Endothelial cell of umbilical vein (primary cell): ENCODE measurements at regions of chr17 and their contacts with region 1.

Region 1: GRCh38 chr17:82022981-82023374 is at the start of gene LRRC45:
- DNase-seq: peak; percentile 100
- H3K4me3 ChIP-seq: peak within 1 kb of the TSS; percentile 50 to 70 (median 60)
- H3K27ac ChIP-seq: peak within 1 kb of the TSS; percentile 21
- H3K4me1 ChIP-seq: peaks cover 12% of the 10 kb centered on the region
- H3K27me3 ChIP-seq: no peaks in the 10 kb centered on the region
- CTCF ChIP-seq: no peak
- POLR2A ChIP-seq: no peak
- total RNA-seq, gene LRRC45: 18.6 and 22.9 TPM in 2 replicates

Region 2: GRCh38 chr17:81871387-81872230 is 151.4 kb before region 1 on chr17:
- CTCF ChIA-PET with region 1: interaction called, 16 read pairs
- POLR2A ChIA-PET with region 1: no interaction called
- dilution Hi-C with region 1: no loop called
- intact Hi-C with region 1: no loop called
- DNase-seq: peak; percentile 81
- H3K4me3 ChIP-seq: peak overlapping the region; percentile 7 to 77 (median 50)
- H3K27ac ChIP-seq: peak overlapping the region; percentile 77
- H3K4me1 ChIP-seq: peaks cover 17% of the 10 kb centered on the region
- H3K27me3 ChIP-seq: no peaks in the 10 kb centered on the region
- CTCF ChIP-seq: peak; percentile 6 to 45
- POLR2A ChIP-seq: peak; percentile 29

Region 3: DNA sequence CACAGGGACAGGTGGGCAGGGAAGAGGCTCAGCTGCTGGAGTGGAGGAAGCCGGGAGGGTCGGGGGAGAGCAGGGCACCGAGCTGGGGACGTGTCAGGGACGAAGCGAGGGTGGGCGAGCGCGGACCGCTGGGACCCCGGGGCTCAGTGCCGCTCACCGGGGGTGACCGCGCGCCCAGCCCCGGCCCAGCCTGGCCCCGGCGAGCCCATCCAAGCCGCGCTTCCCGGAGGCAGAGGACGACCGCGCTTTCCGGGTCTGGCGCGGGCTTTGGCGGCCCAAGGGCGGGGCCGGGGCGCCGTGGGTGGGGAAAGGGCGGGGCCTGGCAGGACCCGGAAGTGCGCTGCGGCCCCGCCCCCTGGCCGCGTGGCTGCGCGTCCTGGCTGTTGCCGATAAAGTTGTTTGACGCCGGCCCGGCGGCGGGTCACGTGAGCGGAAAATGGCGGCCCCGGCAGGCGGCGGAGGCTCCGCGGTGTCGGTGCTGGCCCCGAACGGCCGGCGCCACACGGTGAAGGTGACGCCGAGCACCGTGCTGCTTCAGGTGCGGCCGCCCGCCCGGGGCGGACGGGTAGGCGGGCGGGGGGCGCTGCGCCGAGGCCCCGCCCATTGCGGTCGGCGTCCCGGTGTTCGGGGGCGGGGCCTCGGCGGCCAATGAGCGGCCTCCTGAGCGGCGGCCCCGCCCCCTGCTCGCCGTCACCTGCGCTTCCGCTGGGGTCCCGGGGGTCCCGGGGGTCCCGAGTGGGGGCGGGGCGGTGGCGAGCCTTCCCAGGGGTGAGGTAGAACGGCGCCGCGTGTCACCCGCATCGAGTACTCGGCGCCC is 45.6 kb before region 1 on chr17 and contains the start of gene ASPSCR1:
- CTCF ChIA-PET with region 1: interaction called, 5 read pairs
- POLR2A ChIA-PET with region 1: no interaction called
- dilution Hi-C with region 1: no loop called
- intact Hi-C with region 1: loop called (anchors 5 kb)
- DNase-seq: peak; percentile 87
- H3K4me3 ChIP-seq: peak within 1 kb of the TSS; percentile 56 to 80 (median 61)
- H3K27ac ChIP-seq: peak within 1 kb of the TSS; percentile 90
- H3K4me1 ChIP-seq: peaks cover 5% of the 10 kb centered on the region
- H3K27me3 ChIP-seq: no peaks in the 10 kb centered on the region
- CTCF ChIP-seq: no peak
- POLR2A ChIP-seq: peak; percentile 92
- total RNA-seq, gene ASPSCR1: 30.9 and 36.5 TPM in 2 replicates

Region 4: DNA sequence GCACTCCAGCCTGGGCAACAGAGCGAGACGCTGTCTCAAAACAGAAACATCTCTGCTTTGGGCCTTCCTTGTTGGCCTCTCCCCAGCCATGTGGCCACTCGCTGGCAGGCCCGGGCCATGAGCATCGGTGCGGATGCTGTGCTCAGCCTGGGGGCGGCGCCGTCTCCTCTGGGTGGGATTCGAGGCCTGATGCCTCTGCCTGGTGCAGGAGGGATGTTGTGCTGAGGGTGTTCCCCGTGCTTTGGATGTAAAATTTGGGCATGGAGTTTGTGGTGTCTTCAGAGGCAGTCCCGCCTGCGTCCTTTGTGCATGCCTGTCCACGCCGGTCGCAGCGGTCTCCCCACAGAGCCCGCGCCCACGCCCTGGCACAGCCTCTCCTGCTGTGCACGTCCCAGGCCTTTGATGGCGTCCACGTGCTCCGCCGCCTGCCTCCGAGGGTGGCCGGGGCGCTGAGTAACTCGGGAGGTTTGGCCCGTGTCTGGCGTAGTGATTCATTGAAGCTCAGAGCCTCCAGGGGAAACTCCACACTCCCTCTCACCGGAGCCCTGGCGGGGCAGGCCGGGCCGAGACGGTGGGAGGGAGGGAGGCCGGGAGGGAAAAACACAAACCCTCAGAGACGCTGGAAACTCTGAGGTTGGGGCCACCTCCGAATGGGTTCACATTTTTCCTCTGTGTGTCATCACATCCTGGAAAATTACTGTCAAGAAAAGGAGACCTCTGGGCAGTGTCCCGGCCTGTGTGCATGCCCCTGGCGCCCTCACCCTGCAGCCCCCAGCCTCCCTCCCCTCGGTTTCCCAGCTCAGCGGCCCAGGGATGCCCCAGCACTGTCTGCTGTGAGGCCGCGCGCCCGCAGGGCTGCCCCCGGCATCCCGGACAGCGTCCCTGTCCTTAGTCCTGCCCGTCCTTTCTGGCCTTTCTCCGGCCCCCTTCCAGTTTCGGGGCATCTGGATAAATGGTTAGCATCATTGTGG is 19.3 kb before region 1 on chr17:
- CTCF ChIA-PET with region 1: interaction called, 30 read pairs
- POLR2A ChIA-PET with region 1: no interaction called
- dilution Hi-C with region 1: no loop called
- intact Hi-C with region 1: no loop called
- DNase-seq: peak; percentile 93
- H3K4me3 ChIP-seq: no peak overlapping the region
- H3K27ac ChIP-seq: peak overlapping the region; percentile 54
- H3K4me1 ChIP-seq: peaks cover 13% of the 10 kb centered on the region
- H3K27me3 ChIP-seq: no peaks in the 10 kb centered on the region
- CTCF ChIP-seq: no peak
- POLR2A ChIP-seq: no peak

Region 5: DNA sequence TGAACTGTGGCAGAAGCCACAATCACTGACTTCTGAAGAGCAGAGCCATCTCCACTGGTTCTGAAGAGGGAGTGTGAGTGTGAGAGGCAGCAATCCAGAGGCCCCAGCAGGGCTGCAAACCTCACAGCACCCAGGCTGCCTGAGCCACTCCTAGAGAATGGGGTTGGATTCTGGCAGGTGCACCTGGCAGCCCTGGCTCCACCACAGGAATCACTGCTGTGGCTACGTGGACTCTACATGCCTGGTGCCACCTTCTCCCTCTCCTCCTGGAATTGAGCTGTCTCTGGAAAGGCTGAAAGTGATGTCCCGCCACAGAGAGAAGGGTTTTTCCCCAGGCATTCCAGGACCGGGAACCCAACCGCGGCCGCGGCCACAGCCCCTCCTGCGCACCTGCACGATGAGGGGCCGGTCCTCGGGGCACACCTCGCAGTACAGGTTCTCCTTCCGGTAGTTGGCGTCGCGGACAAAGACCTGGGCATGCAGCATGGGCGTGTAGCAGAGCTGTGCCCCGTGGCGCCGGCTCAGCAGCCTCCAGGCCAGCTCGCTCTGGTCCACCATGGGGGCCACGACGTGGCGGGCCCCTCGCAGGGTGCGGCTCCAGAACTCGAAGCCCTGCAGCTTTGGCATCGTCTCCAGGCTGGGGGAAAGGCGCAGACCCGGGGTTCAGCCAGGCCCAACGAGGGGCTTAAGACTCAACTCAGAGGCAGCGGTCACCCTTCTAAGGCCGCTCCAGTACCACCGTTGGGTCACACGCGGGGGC is 41.6 kb after region 1 on chr17:
- CTCF ChIA-PET with region 1: no interaction called
- POLR2A ChIA-PET with region 1: no interaction called
- dilution Hi-C with region 1: no loop called
- intact Hi-C with region 1: no loop called
- DNase-seq: no peak
- H3K4me3 ChIP-seq: peak overlapping the region; percentile 55 to 82 (median 76)
- H3K27ac ChIP-seq: no peak overlapping the region
- H3K4me1 ChIP-seq: peaks cover 15% of the 10 kb centered on the region
- H3K27me3 ChIP-seq: no peaks in the 10 kb centered on the region
- CTCF ChIP-seq: no peak
- POLR2A ChIP-seq: no peak

Region 6: DNA sequence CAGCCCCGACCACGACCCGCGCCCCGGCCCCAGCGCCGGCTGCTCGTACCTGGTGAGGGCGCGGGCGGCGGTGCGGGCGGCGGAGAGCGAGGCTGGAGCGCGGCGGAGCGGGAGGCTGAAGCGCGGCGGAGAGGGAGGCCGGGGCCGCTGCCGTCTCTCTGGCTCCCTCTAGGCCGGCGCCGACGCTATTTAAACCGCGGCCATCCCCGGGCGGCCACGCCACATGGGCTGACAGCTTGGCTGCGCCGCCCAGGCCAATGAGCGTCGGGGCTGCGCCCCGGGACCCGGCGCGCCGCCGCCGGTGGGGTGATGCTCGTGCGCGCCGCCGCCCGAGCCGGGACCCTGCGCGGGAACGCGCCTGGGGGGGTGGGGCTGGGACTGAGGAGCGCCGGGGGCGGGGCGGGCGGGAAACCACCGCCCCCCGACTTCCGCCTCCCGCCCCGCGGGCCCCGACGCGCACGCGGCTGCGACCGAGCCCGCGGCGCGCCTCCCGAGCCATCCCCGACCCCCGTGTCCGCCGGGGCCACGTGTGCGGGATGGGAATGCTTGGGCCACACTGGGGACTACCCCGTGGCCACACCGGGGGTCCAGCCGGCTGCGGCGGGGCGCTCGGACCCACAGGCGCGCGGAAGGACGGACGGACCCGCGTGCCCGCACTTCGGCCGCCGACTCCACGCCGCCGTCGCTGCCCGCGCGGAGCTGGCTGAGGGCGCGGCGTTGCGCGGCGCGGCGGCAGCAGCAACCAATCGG is 75.3 kb after region 1 on chr17 and contains the start of gene FASN:
- CTCF ChIA-PET with region 1: no interaction called
- POLR2A ChIA-PET with region 1: no interaction called
- dilution Hi-C with region 1: no loop called
- intact Hi-C with region 1: loop called (anchors 2 kb)
- DNase-seq: peak; percentile 93
- H3K4me3 ChIP-seq: peak within 1 kb of the TSS; percentile 35 to 78 (median 54)
- H3K27ac ChIP-seq: peak within 1 kb of the TSS; percentile 76
- H3K4me1 ChIP-seq: peaks cover 20% of the 10 kb centered on the region
- H3K27me3 ChIP-seq: no peaks in the 10 kb centered on the region
- CTCF ChIP-seq: peak; percentile 25 to 56
- POLR2A ChIP-seq: peak; percentile 87
- total RNA-seq, gene FASN: 351 and 360 TPM in 2 replicates